ENCODE measurements at regions of chr3 and their contacts with region 1.

Region 1: DNA sequence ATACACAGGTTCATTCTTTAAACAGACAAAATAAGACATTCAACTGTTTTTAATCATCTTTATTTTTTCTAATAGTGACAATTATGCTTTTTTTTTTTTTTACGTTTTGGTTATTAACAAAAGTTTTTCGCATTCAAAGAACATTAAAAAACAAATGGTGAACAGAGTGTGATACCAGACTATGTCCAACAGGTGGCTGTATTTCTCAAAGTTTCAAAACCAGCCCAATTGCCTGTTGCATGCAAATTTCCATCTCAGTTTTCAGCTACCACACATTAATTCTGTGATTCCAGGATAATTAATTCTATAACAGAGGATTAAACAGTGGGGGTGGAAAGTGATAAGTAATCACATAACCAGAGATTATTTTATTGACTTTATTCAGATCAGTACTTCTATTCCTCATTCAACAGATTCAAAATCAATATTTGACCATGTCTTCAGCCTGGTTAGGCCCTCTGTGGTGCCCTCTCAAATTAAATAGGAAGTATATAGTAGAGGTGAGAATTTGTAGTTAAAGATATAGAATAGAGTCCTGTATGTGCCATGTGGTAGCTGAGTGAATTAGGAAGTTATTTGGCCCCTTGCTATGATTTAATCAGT is 122.2 kb upstream of the DCBLD2 start:
- DNase-seq: peak; percentile 51
- H3K27ac ChIP-seq: no peak overlapping the region
- CTCF ChIP-seq: peak; percentile 74

Region 2: DNA sequence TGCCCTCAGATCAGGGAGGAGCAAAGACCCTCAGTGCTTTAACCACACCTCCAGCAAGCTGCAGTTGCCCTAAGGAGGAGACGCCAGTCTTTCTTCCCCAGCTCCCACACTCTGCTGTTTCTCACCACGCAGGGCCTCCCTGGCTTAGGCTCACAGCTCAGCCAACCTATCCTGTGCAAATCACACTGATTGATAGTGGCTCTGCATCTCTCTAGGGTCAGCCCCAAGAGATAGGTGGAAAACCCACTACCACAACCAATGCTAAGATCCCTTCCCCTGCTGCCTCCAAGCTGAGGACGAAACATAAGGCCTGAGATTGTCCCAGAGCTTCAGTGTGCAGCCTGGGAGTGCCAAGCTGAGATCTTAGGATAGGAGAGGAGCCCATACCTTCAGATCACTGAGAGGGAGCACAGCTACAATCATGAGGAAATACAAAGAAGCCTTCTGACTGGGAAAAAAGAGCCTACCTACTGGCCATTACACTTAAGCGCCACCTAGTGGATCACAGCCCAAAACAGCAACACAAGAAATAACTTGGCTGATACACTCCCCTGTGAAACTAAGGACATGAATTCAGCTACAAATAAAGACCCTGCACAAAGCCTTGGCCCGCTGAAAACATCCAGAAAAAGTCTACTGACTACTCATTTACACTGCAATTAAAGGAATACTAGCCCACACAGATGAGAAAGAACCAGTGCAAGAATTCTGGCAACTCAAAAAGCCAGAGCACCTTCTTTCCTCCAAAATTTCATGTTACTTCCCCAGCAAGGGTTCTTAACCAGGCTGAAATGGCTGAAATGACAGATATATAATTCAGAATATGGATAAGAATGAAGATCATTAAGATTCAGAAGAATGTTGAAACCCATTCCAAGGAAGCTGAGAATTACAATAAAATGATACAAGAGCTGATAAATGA is 149.3 kb after region 1 on chr3:
- CTCF ChIA-PET with region 1: interaction called, 11 read pairs
- POLR2A ChIA-PET with region 1: no interaction called
- DNase-seq: peak; percentile 34
- H3K27ac ChIP-seq: no peak overlapping the region
- CTCF ChIP-seq: peak; percentile 72

Region 3: DNA sequence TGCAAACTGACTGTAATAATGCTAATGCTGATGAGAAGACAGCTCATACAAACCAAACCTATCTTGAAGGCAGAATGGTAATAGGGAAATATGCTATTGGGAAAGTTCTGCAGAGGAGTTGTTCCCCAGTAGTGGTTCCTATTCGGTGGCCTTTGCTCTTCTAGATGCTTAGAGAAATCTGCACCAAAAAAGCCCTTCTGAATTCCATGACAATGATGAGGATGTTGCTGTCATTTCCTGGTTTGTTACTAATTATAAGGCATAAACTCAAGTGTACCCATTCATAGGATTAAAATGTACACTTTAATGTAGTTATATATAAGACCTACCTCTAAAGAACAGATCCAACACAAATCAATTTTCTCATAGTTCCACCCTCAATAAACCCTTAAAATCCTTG is 1347.1 kb after region 1 on chr3:
- CTCF ChIA-PET with region 1: no interaction called
- POLR2A ChIA-PET with region 1: no interaction called
- DNase-seq: no peak
- H3K27ac ChIP-seq: no peak overlapping the region
- CTCF ChIP-seq: no peak

Measured in RWPE1 (cell line).